Activated B cell treated with CpG ODN at 0.5 μM for 24 hours (primary cell): ENCODE measurements at regions of chr7 and their contacts with region 1.

Region 1: GRCh38 chr7:44082541-44083207 is 344 bp upstream of the POLM start:
- DNase-seq: peak; percentile 93
- ATAC-seq: peak; percentile 90
- H3K4me3 Mint-ChIP-seq: peak overlapping the region; percentile 83
- H3K27ac Mint-ChIP-seq: peak overlapping the region; percentile 80
- H3K4me1 Mint-ChIP-seq: peaks cover 47% of the 10 kb centered on the region
- H3K27me3 Mint-ChIP-seq: no peaks in the 10 kb centered on the region
- CTCF ChIP-seq: no peak

Region 2: DNA sequence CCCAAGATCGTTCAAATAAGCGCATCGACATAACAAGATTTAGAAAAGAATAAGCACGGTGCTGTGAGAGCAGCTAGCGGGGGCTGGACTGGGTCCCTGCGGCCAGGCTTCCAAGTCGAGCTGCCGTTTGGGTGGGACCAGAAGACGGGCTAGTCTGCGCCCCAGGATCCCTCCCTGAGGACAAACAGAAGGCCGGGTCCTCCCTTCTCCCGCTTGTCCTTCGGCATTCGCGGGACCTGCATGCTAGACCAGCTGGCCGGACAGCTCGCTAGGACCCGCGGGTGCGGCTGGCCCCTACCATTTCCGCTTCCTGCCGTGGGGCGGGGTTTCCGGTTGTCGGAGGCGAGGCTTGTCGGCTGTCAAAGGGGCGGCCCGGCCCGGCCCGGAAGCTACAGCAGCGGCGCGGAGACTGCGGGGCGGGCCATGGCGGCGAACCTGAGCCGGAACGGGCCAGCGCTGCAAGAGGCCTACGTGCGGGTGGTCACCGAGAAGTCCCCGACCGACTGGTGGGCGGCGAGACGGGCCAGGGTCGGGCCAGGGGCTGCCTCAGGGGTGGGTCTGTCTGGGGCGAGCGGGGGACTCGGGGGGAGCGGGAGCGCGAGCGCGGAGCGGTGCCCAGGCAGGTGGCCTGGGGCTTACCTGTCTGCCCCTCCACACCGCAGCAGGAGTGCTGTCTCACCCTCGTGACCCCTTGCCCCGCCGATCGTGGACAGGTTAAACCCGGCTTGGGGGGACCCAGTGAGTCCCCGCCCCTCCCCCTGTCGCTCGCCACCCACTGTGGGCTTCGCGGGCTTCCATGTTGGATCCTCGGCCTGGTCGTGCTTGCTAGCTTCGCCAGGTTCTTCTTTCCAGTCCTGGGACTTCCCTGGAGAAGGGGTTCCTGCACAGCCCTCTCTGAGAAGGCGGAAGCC is 38.1 kb before region 1 on chr7 and contains the start of gene DBNL:
- CTCF ChIA-PET with region 1: interaction called, 3 read pairs
- POLR2A ChIA-PET with region 1: interaction called, 52 read pairs
- intact Hi-C with region 1: loop called (anchors 1 kb)
- DNase-seq: peak; percentile 92
- ATAC-seq: peak; percentile 50
- H3K4me3 Mint-ChIP-seq: peak within 1 kb of the TSS; percentile 93
- H3K27ac Mint-ChIP-seq: peak within 1 kb of the TSS; percentile 95
- H3K4me1 Mint-ChIP-seq: peaks cover 64% of the 10 kb centered on the region
- H3K27me3 Mint-ChIP-seq: no peaks in the 10 kb centered on the region
- CTCF ChIP-seq: no peak
- total RNA-seq, gene DBNL: 198 and 210 TPM in 2 replicates

Region 3: GRCh38 chr7:44065436-44066118 is 17.1 kb before region 1 on chr7 and contains the start of gene PGAM2:
- CTCF ChIA-PET with region 1: interaction called, 3 read pairs
- POLR2A ChIA-PET with region 1: interaction called, 12 read pairs
- intact Hi-C with region 1: no loop called
- DNase-seq: no peak
- ATAC-seq: peak; percentile 32
- H3K4me3 Mint-ChIP-seq: peak within 1 kb of the TSS; percentile 28
- H3K27ac Mint-ChIP-seq: peak within 1 kb of the TSS; percentile 72
- H3K4me1 Mint-ChIP-seq: peaks cover 65% of the 10 kb centered on the region
- H3K27me3 Mint-ChIP-seq: no peaks in the 10 kb centered on the region
- CTCF ChIP-seq: no peak
- total RNA-seq, gene PGAM2: 1.1 and 1.2 TPM in 2 replicates

Region 4: DNA sequence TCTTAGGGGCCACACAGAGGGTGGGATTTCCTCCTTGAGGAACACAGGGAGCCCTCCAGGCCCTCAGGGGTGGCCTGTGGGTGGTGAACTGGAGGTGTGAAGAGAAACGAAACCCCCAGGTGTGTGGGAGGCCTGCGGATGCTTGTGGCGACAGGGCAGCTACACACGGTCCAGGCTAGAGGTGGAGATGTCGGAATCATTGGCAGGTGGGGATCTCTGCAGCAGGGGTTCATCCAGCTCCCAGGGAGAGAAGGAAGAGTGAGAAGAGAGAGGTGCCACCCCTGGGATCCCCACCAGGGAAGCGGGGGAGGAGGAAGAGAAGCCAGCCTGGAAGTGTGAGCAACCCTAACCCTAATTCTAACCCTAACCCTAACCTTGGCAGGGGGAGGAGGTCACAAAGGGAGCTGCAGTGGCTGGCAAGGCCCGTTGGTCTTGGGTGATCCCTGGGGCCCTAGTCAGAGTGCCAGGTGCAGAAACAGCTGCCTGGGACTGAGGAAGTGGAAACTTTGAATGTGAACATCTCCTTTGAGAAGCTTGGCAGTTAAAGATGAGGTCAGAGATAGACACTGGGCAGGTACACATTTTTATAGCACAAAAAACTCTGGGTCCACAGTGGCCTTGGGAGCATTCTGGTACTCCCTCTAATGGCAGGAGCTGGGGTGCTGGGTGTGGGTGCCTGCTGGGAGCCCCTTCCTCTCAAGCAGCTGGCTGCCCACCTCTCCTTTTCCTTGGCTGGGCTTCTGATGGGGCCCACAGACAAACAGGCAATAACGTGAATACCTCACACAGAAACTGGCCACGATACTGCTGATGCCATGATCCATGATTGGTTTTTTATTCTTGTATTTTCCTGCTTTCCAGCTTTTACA is 14.6 kb after region 1 on chr7:
- CTCF ChIA-PET with region 1: no interaction called
- POLR2A ChIA-PET with region 1: interaction called, 11 read pairs
- intact Hi-C with region 1: loop called (anchors 1 kb)
- DNase-seq: peak; percentile 53
- ATAC-seq: peak; percentile 89
- H3K4me3 Mint-ChIP-seq: peak overlapping the region; percentile 15
- H3K27ac Mint-ChIP-seq: peak overlapping the region; percentile 91
- H3K4me1 Mint-ChIP-seq: peaks cover 79% of the 10 kb centered on the region
- H3K27me3 Mint-ChIP-seq: no peaks in the 10 kb centered on the region
- CTCF ChIP-seq: no peak

Region 5: DNA sequence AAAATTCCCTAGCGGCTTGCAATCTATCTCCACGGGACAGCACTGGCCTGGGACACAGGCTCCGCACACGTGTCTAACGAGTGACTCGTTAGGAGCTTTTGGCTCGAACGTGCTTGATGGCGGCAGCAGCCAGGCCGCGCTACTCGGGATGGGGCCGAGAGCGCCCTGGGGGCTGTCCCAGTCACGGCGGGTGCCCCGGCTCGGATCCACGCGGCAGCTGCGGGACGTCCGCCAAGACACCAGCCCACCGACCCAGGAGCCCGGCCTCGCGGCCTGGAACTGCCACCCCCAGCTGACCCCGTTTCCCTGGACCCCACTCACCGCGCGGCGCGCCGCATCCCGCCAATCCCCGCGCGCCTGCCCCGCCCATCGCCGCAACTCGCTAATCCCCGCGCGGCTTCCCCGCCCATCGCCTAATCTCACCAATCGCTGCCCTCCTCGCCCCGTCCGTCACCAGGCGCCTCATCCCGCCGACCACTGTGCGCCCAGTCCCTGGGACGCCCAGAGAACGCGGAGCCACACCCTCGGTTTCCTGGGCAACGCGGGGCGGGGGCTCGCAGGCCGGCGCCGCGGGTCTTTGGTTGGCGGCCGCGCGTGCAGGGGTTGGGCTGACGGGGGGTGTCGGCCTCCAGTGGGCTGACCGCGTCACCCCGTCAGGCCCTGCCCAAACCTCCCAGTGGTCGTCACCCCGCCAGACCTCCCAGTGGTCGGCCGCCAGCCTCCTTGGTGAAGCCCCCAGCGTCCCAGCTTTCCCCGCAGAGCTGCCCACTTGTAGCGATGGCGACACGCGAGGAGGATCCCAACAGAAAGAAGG is 40.7 kb after region 1 on chr7 and contains the start of gene POLD2:
- CTCF ChIA-PET with region 1: interaction called, 5 read pairs
- POLR2A ChIA-PET with region 1: interaction called, 11 read pairs
- intact Hi-C with region 1: loop called (anchors 1 kb)
- DNase-seq: peak; percentile 96
- ATAC-seq: peak; percentile 98
- H3K4me3 Mint-ChIP-seq: peak within 1 kb of the TSS; percentile 88
- H3K27ac Mint-ChIP-seq: peak within 1 kb of the TSS; percentile 79
- H3K4me1 Mint-ChIP-seq: peaks cover 25% of the 10 kb centered on the region
- H3K27me3 Mint-ChIP-seq: no peaks in the 10 kb centered on the region
- CTCF ChIP-seq: no peak
- total RNA-seq, gene POLD2: 146 and 147 TPM in 2 replicates

Region 6: GRCh38 chr7:44152971-44153911 is 70.6 kb after region 1 on chr7:
- CTCF ChIA-PET with region 1: no interaction called
- POLR2A ChIA-PET with region 1: no interaction called
- intact Hi-C with region 1: no loop called
- DNase-seq: peak; percentile 9
- ATAC-seq: no peak
- H3K4me3 Mint-ChIP-seq: no peak overlapping the region
- H3K27ac Mint-ChIP-seq: no peak overlapping the region
- H3K4me1 Mint-ChIP-seq: peaks cover 8% of the 10 kb centered on the region
- H3K27me3 Mint-ChIP-seq: no peaks in the 10 kb centered on the region
- CTCF ChIP-seq: no peak

Region 7: DNA sequence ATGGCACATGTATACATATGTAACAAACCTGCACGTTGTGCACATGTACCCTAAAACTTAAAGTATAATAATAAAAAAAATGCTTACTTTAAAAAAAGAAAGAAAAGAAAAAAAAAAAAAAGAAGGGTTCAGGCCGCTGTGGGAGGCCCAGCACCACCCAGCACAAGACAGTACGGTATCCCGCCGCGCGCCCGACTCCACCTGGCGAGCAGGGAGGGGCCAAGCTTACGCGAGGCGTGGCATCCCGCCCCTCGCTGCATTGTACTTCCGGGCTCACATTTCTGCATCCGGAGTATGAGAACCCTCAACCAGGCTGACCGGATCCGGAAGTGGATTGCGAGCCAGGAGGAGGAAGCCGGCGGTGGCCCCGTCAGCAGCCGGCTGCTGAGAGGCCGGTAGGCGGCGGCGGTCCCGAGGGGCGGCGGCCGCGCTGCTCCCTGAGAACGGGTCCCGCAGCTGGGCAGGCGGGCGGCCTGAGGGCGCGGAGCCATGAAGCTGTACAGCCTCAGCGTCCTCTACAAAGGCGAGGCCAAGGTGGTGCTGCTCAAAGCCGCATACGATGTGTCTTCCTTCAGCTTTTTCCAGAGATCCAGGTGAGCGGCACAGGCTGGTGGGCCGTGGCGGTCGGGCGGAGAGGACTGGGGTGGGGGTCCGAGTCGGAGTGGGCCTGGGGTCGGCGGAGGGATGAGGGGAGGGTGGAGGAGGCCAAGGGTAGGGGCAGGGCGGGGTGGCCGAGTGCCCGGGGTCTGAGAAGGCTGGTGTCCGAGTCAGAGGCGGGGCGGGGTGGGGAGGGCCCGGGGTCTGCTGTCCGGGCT is 118.2 kb after region 1 on chr7 and contains the start of gene YKT6:
- CTCF ChIA-PET with region 1: interaction called, 6 read pairs
- POLR2A ChIA-PET with region 1: interaction called, 4 read pairs
- intact Hi-C with region 1: loop called (anchors 1 kb)
- DNase-seq: peak; percentile 87
- ATAC-seq: peak; percentile 97
- H3K4me3 Mint-ChIP-seq: peak within 1 kb of the TSS; percentile 87
- H3K27ac Mint-ChIP-seq: peak within 1 kb of the TSS; percentile 12
- H3K4me1 Mint-ChIP-seq: peaks cover 27% of the 10 kb centered on the region
- H3K27me3 Mint-ChIP-seq: peaks cover 6% of the 10 kb centered on the region
- CTCF ChIP-seq: no peak
- total RNA-seq, gene YKT6: 78.2 and 78.7 TPM in 2 replicates

Region 8: GRCh38 chr7:44505595-44505994 is 422.9 kb after region 1 on chr7:
- CTCF ChIA-PET with region 1: no interaction called
- POLR2A ChIA-PET with region 1: no interaction called
- intact Hi-C with region 1: no loop called
- DNase-seq: no peak
- ATAC-seq: peak; percentile 18
- H3K4me3 Mint-ChIP-seq: no peak overlapping the region
- H3K27ac Mint-ChIP-seq: peak overlapping the region; percentile 31
- H3K4me1 Mint-ChIP-seq: peaks cover 2% of the 10 kb centered on the region
- H3K27me3 Mint-ChIP-seq: no peaks in the 10 kb centered on the region
- CTCF ChIP-seq: no peak

Region 9: GRCh38 chr7:44565097-44565794 is 482.6 kb after region 1 on chr7:
- CTCF ChIA-PET with region 1: no interaction called
- POLR2A ChIA-PET with region 1: no interaction called
- intact Hi-C with region 1: loop called (anchors 1 kb)
- DNase-seq: peak; percentile 63
- ATAC-seq: peak; percentile 98
- H3K4me3 Mint-ChIP-seq: no peak overlapping the region
- H3K27ac Mint-ChIP-seq: peak overlapping the region; percentile 50
- H3K4me1 Mint-ChIP-seq: no peaks in the 10 kb centered on the region
- H3K27me3 Mint-ChIP-seq: no peaks in the 10 kb centered on the region
- CTCF ChIP-seq: peak; percentile 55

Region 10: DNA sequence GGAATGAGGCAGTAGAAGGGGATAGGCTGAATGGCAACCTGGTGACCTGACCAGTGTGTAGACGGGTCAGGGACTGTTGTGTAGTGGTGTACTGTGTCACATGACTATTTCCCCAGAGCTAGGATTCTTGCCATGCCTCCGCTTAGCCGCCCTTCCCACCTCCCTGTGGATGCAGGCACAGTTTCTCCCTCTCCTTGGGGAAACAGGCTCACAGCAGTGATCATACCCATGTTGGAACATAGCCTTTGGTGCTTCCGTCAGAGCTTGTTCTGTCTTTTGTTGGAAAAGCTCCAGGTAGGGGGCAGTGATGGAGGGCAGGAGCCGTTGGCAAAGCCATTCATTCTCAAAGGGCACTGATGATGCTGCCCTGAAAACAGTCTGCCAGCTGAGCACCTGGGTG is 568.1 kb after region 1 on chr7:
- CTCF ChIA-PET with region 1: no interaction called
- POLR2A ChIA-PET with region 1: no interaction called
- intact Hi-C with region 1: no loop called
- DNase-seq: no peak
- ATAC-seq: no peak
- H3K4me3 Mint-ChIP-seq: no peak overlapping the region
- H3K27ac Mint-ChIP-seq: no peak overlapping the region
- H3K4me1 Mint-ChIP-seq: peaks cover 6% of the 10 kb centered on the region
- H3K27me3 Mint-ChIP-seq: no peaks in the 10 kb centered on the region
- CTCF ChIP-seq: no peak

Region 11: DNA sequence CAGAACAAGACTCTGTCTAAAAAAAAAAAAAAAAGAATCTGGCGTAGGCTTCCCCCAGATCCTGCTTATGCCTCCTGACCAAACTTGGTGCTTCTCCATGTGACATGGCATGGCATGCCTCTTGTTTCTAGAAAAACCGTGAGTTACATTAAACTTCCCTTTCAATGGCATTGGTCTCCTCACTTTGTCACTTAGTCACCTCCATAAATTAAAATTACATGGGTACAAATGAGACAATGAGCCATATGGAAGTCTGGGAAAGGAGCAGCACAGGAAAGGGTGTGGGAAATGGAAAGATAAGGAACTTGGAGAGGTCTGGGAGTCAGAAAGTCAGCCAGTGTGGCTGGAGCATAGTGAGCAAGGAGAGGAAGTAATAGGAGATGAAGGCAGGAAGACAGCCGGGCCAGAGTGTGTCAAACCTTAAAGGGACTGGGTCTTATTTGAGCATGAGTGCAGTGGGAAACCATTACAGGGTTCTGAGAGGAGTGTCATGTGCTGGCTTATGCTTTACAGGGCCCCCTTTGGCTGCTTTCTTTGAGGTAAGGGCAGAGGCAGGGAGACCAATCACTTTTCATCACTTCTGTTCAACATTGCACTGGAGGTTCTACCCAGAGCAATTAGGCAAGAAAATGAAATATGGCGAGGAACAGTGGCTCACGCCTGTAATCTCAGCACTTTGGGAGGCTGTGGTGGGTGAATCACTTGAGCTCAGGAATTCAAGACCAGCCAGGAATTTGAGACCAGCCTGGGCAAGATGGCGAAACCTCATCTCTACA is 644.7 kb after region 1 on chr7:
- CTCF ChIA-PET with region 1: no interaction called
- POLR2A ChIA-PET with region 1: no interaction called
- intact Hi-C with region 1: no loop called
- DNase-seq: no peak
- ATAC-seq: no peak
- H3K4me3 Mint-ChIP-seq: no peak overlapping the region
- H3K27ac Mint-ChIP-seq: no peak overlapping the region
- H3K4me1 Mint-ChIP-seq: no peaks in the 10 kb centered on the region
- H3K27me3 Mint-ChIP-seq: no peaks in the 10 kb centered on the region
- CTCF ChIP-seq: no peak